Right ventricle myocardium inferior (tissue), 1 donor: ENCODE measurements at regions of chr5 and their contacts with region 1.

Region 1: GRCh38 chr5:110757118-110757729 is 18.4 kb downstream of the SLC25A46 start:
- DNase-seq: no peak
- ATAC-seq: no peak

Region 2: DNA sequence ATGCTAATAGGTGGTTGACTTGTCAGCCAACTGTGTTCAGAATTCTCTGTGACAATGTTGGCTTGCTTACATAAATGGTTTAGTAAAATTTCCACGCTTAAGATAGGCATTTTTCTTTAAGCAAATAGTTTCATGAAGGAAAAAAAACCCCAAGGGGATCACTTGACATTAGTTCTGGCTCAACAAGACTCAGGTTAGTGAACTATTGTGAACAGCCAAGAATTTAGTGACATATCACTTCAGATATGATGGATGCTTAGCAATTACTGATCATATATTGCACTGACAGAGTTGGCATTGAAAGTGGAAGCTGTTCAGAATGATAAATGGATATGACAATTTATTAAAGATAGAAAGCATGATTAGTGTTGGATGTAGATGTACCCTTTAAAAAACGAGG is 249.3 kb before region 1 on chr5:
- intact Hi-C with region 1: no loop called
- DNase-seq: no peak
- ATAC-seq: no peak

Region 3: DNA sequence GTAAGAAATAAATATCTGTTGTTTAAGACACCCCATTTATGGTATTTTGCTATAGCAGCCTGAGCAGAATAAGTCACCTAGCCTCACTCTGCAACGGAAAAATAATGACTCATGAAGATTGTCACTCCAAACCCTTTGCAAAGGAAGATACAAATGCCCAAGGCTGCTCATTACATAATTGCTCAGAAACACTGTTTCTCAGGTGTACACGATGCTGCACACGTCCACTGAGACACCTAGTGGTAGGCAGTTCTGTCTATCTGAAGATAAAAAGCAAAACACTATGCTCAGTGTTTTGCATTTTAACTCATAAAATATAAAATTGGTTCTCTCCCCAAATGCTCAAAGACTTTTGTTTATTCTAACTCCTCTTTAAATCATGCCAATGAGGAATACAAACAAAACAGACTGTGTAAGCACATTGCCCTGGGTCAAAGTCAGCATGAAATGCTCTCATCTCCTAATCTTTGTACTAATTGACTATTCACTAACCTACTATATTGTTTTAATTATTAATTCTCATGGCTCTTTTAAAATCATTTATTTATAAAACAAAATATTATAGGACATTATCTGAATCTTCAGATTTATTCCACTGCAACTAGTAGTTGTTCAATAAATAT is 306.6 kb after region 1 on chr5:
- intact Hi-C with region 1: loop called (anchors 2 kb)
- DNase-seq: no peak
- ATAC-seq: no peak

Region 4: GRCh38 chr5:111092062-111092853 is 335.0 kb after region 1 on chr5 and contains the start of gene WDR36:
- intact Hi-C with region 1: loop called (anchors 10 kb)
- DNase-seq: peak; percentile 94
- ATAC-seq: peak; percentile 99
- total RNA-seq, gene WDR36: 14.6 TPM